Heart right ventricle (tissue), 16 donors: ENCODE measurements at regions of chr10 and their contacts with region 1.

Region 1: DNA sequence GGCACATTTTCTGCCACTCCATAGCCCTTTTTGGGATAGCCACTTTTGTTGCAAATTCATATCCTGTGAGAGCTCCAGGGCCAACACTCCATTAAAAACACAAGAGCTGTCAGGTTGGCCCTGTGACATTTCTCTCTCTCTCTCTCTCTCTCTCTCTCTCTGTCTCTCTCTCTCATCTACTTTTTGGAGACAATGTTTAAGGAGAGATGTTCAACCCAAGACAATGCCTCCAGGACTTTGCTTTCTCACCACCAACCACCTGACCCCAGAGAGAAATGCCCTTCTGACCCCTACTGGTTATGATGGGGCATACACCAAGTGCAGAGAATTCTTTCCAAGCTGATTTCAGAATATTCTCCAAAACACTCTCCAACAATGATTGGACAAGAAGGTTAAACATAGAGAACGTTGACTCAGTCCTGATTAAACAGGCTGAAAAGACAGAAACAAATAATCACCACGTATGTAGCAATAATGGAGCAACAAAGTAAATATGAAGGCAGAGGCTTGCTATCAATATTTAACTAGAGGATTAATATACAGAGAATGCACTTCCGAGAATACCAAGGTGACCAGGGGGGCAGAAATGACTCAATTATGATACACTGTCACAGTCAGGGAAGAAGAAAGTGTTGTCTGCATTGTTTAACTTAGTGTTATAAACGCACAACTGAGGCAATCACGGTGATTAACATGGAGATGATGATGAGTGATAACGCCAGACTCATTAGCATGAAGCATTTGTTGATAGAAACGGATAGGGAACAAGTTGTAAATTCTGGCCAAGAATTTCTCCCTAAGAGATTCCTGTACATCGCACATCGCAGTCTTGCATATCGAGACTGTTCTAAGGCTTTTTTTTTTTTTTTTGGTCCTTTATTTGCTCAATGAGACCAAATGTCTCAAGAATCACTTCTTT is 178.5 kb downstream of the NRP1 start:
- DNase-seq: no peak
- ATAC-seq: peak in 1 of 8 donors; percentile 42
- H3K4me3 ChIP-seq: no peak overlapping the region
- H3K27ac ChIP-seq: peak overlapping the region in 7 of 10 donors; percentile 7 to 82 (median 70)
- H3K4me1 ChIP-seq: peaks cover 2 to 47% (median 18%) of the 10 kb centered on the region in 9 donors
- H3K27me3 ChIP-seq: peaks cover 0 to 7% (median 0%) of the 10 kb centered on the region in 7 donors
- CTCF ChIP-seq: peak in 8 of 9 donors; percentile 22 to 59 (median 47)

Region 2: GRCh38 chr10:32795598-32796183 is 360.3 kb before region 1 on chr10:
- intact Hi-C with region 1: loop called in 3 of 10 experiments (anchors 10 kb)
- DNase-seq: peak in 1 of 2 donors; percentile 13
- ATAC-seq: peak in 2 of 8 donors; percentile 58 to 67
- H3K4me3 ChIP-seq: no peak overlapping the region
- H3K27ac ChIP-seq: no peak overlapping the region
- H3K4me1 ChIP-seq: no peaks in the 10 kb centered on the region
- H3K27me3 ChIP-seq: no peaks in the 10 kb centered on the region
- CTCF ChIP-seq: peak; percentile 51 to 87 (median 74)

Region 3: DNA sequence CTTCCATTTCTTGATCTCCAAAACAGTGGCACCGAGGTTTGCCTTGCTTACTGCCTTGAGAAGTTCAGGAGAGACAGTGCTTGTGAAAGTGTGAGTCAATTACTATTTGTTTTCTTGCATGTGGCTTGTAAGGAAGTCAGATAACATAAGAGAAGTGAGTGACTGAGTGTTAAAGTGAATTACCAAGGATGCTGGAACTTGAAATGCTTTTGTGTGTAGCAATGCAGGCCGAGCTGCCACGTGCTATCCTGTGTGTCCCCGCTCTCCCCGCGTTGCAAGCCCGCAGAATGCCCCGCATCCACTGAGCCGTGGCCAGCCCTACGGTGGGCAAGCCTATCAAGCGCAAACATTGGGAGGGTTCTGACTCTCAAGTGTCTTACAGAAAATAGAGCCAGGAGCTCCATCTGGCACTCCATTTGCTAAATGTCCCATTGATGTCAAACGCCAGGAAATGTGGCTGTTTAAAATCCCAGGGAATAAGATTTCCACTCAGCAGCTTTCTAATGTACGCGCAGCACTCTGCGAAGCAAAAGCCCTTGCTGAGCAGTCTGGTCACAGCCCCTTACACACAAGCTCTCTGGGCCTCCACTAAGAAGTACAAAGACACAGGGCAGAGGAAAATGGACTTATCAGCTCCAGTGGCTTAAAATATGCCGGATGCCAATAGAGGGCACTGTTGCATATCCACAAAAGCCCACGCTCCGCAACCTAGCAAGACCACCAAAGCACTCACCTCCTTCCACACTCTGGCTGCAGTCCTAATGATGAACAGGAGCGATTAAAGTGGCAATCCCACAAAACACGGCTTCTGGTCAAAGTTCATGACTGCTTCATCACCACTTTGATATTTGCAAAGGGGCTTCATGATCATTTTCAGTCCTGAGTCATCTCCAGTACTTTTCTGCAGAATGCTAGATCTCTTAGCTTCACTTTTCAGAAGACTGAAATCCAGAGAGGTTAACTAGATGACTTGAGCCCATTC is 40.0 kb before region 1 on chr10:
- intact Hi-C with region 1: loop called in 2 of 10 experiments (anchors 5 kb)
- DNase-seq: peak in 1 of 2 donors; percentile 54
- ATAC-seq: peak in 5 of 8 donors; percentile 47 to 64 (median 54)
- H3K4me3 ChIP-seq: no peak overlapping the region
- H3K27ac ChIP-seq: peak overlapping the region in 5 of 10 donors; percentile 8 to 76 (median 21)
- H3K4me1 ChIP-seq: peaks cover 0 to 66% (median 35%) of the 10 kb centered on the region in 9 donors
- H3K27me3 ChIP-seq: no peaks in the 10 kb centered on the region
- CTCF ChIP-seq: peak; percentile 38 to 69 (median 60)

Region 4: GRCh38 chr10:33211106-33211878 is 55.3 kb after region 1 on chr10:
- intact Hi-C with region 1: no loop called
- DNase-seq: peak in 1 of 2 donors; percentile 52
- ATAC-seq: peak; percentile 54 to 86 (median 76)
- H3K4me3 ChIP-seq: no peak overlapping the region
- H3K27ac ChIP-seq: peak overlapping the region; percentile 40 to 82 (median 64)
- H3K4me1 ChIP-seq: peaks cover 0 to 65% (median 36%) of the 10 kb centered on the region in 9 donors
- H3K27me3 ChIP-seq: no peaks in the 10 kb centered on the region
- CTCF ChIP-seq: no peak